Naive thymus-derived CD8-positive, alpha-beta T cell (primary cell): ENCODE measurements at regions of chr16 and their contacts with region 1.

Region 1: DNA sequence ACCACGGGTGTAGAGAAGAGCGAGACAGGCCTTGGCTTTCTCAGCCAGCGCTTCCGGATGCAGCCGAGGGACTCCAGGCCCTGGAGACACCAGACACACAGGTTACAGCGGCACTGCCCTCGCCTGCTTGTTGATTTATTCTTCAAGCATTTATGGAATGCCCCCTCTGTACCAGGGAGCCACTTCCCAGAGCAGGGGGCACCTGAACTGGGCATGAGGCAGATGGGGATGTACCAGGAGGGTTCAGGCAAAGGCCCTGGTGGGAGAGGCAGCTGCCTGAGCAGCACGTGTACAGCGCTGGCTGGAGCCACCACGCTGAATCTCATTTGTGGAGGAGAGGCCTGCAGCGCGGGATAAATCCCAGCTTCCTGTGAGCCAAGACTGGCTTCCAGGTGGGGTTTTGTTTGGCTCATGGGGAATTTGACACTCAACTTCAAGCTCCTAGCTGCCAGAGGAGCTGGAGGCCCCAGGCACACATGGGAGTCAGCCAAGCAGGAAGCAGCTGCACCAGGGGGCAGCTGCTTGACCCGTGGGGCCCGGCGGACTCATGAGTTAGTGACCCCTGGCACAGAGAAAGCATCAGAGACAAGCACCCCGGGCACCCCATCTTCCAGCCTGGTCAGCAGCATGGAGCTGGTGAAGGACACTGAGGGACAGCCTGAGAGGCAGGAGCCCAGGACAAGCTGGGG is 59.7 kb downstream of the IL21R start:
- DNase-seq: no peak
- ATAC-seq: no peak
- H3K4me3 Mint-ChIP-seq: peak overlapping the region in 7 of 10 donors; percentile 27 to 75 (median 37)
- H3K27ac Mint-ChIP-seq: peak overlapping the region in 9 of 10 donors; percentile 43 to 99 (median 88)
- H3K4me1 Mint-ChIP-seq: peaks cover 39 to 86% (median 68%) of the 10 kb centered on the region in 4 donors
- H3K27me3 Mint-ChIP-seq: no peaks in the 10 kb centered on the region

Region 2: GRCh38 chr16:27195941-27196595 is 265.6 kb before region 1 on chr16:
- POLR2A ChIA-PET with region 1: interaction called, 11 read pairs
- DNase-seq: peak in 9 of 10 donors; percentile 16 to 90 (median 75)
- ATAC-seq: peak; percentile 89 to 94
- H3K4me3 Mint-ChIP-seq: peak overlapping the region; percentile 52 to 89 (median 77)
- H3K27ac Mint-ChIP-seq: peak overlapping the region; percentile 92 to 99 (median 98)
- H3K4me1 Mint-ChIP-seq: peaks cover 35 to 79% (median 71%) of the 10 kb centered on the region in 4 donors
- H3K27me3 Mint-ChIP-seq: no peaks in the 10 kb centered on the region

Region 3: GRCh38 chr16:27203429-27204231 is 258.0 kb before region 1 on chr16 and contains the start of gene KDM8:
- POLR2A ChIA-PET with region 1: interaction called, 18 read pairs
- DNase-seq: peak; percentile 98 to 100 (median 100)
- ATAC-seq: peak; percentile 79 to 83
- H3K4me3 Mint-ChIP-seq: peak within 1 kb of the TSS; percentile 85 to 100 (median 98)
- H3K27ac Mint-ChIP-seq: peak within 1 kb of the TSS; percentile 97 to 100 (median 100)
- H3K4me1 Mint-ChIP-seq: peaks cover 21 to 70% (median 61%) of the 10 kb centered on the region in 4 donors
- H3K27me3 Mint-ChIP-seq: peaks cover 0 to 3% (median 0%) of the 10 kb centered on the region in 5 donors
- polyA plus RNA-seq, gene KDM8: 3.8 to 6.2 (median 5.6) TPM

Region 4: GRCh38 chr16:27273670-27274423 is 187.8 kb before region 1 on chr16:
- POLR2A ChIA-PET with region 1: no interaction called
- DNase-seq: peak in 3 of 10 donors; percentile 38 to 54 (median 45)
- ATAC-seq: peak; percentile 75 to 77
- H3K4me3 Mint-ChIP-seq: peak overlapping the region; percentile 10 to 85 (median 71)
- H3K27ac Mint-ChIP-seq: peak overlapping the region; percentile 76 to 94 (median 86)
- H3K4me1 Mint-ChIP-seq: peaks cover 29 to 62% (median 44%) of the 10 kb centered on the region in 4 donors
- H3K27me3 Mint-ChIP-seq: no peaks in the 10 kb centered on the region

Region 5: GRCh38 chr16:27401768-27402568 is 59.7 kb before region 1 on chr16 and contains the start of gene IL21R:
- POLR2A ChIA-PET with region 1: interaction called, 37 read pairs
- DNase-seq: peak; percentile 71 to 94 (median 82)
- ATAC-seq: peak; percentile 80 to 81
- H3K4me3 Mint-ChIP-seq: peak within 1 kb of the TSS; percentile 97 to 99 (median 98)
- H3K27ac Mint-ChIP-seq: peak within 1 kb of the TSS; percentile 92 to 100 (median 99)
- H3K4me1 Mint-ChIP-seq: peaks cover 29 to 87% (median 73%) of the 10 kb centered on the region in 4 donors
- H3K27me3 Mint-ChIP-seq: no peaks in the 10 kb centered on the region
- polyA plus RNA-seq, gene IL21R: 26.5 to 47.1 (median 33.9) TPM

Region 6: DNA sequence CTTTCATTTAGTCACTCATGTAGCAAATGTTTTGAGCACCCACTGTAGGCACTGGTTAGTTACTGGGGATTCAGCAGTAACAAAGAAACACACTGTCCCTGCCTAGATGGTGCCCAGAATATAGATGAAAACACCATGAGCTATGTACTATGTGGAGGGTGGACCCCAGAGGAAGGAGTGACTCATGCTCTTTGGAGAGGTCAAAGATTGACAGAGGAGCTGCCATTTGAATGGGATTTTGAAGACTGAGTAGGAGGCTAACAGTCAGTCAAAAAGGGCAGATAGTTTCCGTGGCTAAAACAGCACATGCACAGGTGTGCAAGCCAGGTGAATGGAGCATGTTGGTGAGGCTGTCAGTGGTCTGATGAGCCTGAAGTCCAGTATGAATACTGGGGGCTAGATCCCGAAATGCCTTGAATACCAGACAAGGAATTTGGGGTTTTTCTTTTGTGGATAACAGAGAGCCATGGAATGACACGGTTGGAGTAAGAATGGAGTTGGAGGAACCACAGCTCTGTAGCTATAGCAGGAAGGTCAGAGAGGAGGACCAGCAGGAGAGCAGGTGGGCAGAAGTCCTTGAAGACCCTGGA is 53.5 kb before region 1 on chr16:
- POLR2A ChIA-PET with region 1: interaction called, 37 read pairs
- DNase-seq: peak in 3 of 10 donors; percentile 19 to 33 (median 26)
- ATAC-seq: peak; percentile 55 to 63
- H3K4me3 Mint-ChIP-seq: peak overlapping the region; percentile 35 to 99 (median 78)
- H3K27ac Mint-ChIP-seq: peak overlapping the region; percentile 87 to 100 (median 94)
- H3K4me1 Mint-ChIP-seq: peaks cover 41 to 94% (median 82%) of the 10 kb centered on the region in 4 donors
- H3K27me3 Mint-ChIP-seq: no peaks in the 10 kb centered on the region

Region 7: DNA sequence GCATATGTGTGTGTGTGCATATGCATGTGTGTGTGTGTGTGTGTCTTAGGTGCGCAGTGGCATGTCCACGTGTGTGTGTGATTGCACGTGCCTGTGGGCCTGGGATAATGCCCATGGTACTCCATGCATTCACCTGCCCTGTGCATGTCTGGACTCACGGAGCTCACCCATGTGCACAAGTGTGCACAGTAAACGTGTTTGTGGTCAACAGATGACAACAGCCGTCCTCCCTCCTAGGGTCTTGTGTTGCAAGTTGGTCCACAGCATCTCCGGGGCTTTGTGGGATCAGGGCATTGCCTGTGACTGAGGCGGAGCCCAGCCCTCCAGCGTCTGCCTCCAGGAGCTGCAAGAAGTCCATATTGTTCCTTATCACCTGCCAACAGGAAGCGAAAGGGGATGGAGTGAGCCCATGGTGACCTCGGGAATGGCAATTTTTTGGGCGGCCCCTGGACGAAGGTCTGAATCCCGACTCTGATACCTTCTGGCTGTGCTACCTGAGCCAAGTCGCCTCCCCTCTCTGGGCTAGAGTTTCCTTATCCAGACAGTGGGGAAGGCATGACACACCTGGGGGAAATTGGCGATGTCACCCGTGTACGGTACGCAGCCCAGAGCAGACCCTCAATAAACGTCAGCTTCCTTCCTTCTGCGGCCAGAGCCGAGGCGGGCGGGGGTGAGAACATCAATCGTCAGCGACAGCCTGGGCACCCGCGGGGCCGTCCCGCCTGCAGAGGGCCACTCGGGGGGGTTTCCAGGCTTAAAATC is 12.0 kb before region 1 on chr16:
- POLR2A ChIA-PET with region 1: interaction called, 120 read pairs
- DNase-seq: peak; percentile 65 to 90 (median 84)
- ATAC-seq: peak; percentile 61 to 78
- H3K4me3 Mint-ChIP-seq: peak overlapping the region; percentile 58 to 86 (median 74)
- H3K27ac Mint-ChIP-seq: peak overlapping the region; percentile 81 to 99 (median 96)
- H3K4me1 Mint-ChIP-seq: peaks cover 48 to 93% (median 88%) of the 10 kb centered on the region in 4 donors
- H3K27me3 Mint-ChIP-seq: no peaks in the 10 kb centered on the region

Region 8: GRCh38 chr16:27549859-27550581 is 88.4 kb after region 1 on chr16 and contains the starts of genes GTF3C1 and KATNIP:
- POLR2A ChIA-PET with region 1: interaction called, 20 read pairs
- DNase-seq: peak; percentile 99 to 100 (median 100)
- ATAC-seq: peak; percentile 93 to 95
- H3K4me3 Mint-ChIP-seq: peak within 1 kb of the TSS; percentile 97 to 99 (median 98)
- H3K27ac Mint-ChIP-seq: peak within 1 kb of the TSS; percentile 92 to 100 (median 100)
- H3K4me1 Mint-ChIP-seq: peaks cover 27 to 50% (median 42%) of the 10 kb centered on the region in 4 donors
- H3K27me3 Mint-ChIP-seq: no peaks in the 10 kb centered on the region
- polyA plus RNA-seq, gene GTF3C1: 25.8 to 36.1 (median 26.9) TPM
- polyA plus RNA-seq, gene KATNIP: 1.3 to 3.4 (median 1.9) TPM

Region 9: DNA sequence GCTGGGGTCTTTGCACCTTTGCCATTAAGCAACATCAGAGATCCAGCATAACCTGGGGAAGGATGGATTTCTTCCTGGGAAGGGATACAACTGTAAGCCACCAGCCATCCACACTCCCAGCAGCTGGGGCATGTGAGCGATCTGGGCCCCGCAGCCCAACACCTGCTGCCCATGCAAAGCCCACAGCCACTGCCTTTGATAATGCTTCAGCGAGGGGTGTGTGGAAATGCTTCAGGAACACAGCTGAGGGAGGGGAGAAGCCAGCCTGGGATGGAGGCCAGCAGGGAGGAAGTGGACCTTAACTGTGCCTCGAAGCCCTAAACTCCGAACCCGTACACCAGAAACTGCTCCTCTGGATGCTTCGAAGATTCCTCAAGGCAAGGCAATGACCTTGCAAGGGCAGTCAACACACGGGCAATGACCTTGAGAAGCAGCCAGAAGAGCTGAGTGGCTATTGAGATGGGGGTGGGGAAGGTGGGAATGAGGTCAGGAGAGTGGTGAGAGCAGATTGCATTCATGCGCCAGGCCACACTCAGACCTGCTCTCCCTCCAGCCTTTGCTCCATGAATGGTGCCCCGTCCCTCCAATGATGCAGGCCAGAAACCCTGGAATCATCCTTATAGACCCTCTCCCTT is 137.4 kb after region 1 on chr16:
- POLR2A ChIA-PET with region 1: no interaction called
- DNase-seq: no peak
- ATAC-seq: no peak
- H3K4me3 Mint-ChIP-seq: no peak overlapping the region
- H3K27ac Mint-ChIP-seq: peak overlapping the region in 2 of 10 donors; percentile 4 to 50
- H3K4me1 Mint-ChIP-seq: peaks cover 0 to 3% (median 0%) of the 10 kb centered on the region in 4 donors
- H3K27me3 Mint-ChIP-seq: no peaks in the 10 kb centered on the region